ENCODE measurements at regions of chr19 and their contacts with region 1.

Region 1: DNA sequence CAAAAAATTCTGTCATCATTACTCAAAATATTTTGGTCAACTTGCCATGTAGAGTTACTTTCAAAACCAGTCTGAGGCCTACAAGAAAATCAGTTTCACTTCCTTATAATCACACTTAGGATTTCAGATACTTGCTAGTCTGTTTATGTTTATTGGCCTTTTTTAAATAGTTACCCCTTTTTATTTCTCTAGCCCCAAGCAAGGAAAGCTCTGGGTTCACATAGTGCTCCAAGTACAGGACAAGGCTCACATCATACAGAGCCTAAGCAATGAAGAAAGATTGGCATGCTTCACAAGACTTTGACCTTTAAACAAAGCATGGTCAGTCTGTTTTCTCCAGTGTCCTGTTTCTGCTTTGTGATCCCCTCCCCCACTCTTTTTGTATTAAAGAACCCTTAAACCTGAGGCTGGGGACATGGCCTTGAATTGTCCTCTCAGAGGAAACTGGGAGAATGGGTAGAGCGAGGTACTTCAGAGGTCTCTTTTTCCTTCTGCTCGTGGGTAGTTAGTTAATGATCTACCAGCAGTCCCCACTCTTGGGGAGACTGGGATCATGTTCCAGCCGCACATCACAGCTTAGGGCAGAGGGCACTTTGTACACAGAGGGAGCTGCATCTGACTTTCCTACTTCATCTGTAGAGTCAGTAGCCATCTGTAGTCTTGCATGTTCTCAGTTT is 30.7 kb downstream of the CEACAM1 start:
- DNase-seq: peak; percentile 98
- ATAC-seq: peak; percentile 99
- H3K4me3 ChIP-seq: peak overlapping the region in 2 of 3 experiments; percentile 36 to 44; a peak in 3 of 6 replicates
- H3K27ac ChIP-seq: peak overlapping the region; percentile 93
- H3K4me1 ChIP-seq: peaks cover 81% of the 10 kb centered on the region
- H3K27me3 ChIP-seq: no peaks in the 10 kb centered on the region
- CTCF ChIP-seq: peak; percentile 12; the same call in 1 of the 2 replicates
- EP300 ChIP-seq: peak; percentile 43 to 81; a peak in 2 of 4 replicates
- POLR2A ChIP-seq: peak; percentile 86 to 90
- RAD21 ChIP-seq: no peak

Region 2: DNA sequence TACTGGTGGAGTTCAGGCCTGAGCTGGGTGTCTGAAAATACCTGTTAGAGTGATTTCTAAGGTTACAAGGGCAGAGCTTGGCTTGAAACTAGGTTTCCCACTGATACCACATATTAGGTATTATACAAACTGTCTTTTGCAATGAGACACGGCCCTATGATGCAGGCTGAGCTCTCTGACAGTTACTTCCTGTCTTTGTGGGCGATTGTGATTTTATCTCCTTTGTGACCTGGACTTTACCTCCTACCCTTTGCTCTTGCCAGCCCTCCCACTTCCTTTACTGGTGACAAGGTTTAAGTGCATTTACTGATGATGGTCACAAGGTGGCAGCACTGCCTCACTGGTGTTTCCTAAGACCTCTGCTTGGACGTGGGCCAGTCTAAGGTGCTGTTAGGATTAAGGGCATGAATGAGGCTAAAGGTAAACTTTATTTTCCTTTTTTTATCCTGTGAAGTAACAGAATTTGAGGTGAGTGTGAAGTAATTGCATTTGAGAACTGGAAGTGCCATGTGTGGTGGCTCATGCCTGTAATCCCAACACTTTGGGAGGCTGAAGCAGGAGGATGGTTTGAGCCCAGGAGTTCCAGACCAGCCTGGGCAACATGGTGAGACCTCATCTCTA is 47.2 kb before region 1 on chr19:
- CTCF ChIA-PET with region 1: interaction called, 4 read pairs
- POLR2A ChIA-PET with region 1: interaction called, 17 read pairs
- in situ Hi-C with region 1: no loop called
- intact Hi-C with region 1: no loop called
- DNase-seq: peak; percentile 98
- ATAC-seq: peak; percentile 99
- H3K4me3 ChIP-seq: peak overlapping the region in 1 of 3 experiments; percentile 25; a peak in 1 of 6 replicates
- H3K27ac ChIP-seq: peak overlapping the region; percentile 71
- H3K4me1 ChIP-seq: peaks cover 79% of the 10 kb centered on the region
- H3K27me3 ChIP-seq: no peaks in the 10 kb centered on the region
- CTCF ChIP-seq: peak; percentile 98
- EP300 ChIP-seq: peak; percentile 62 to 92; a peak in 3 of 4 replicates
- POLR2A ChIP-seq: peak in 1 of 2 experiments; percentile 38; a peak in 1 of 4 replicates
- RAD21 ChIP-seq: peak; percentile 97

Region 3: DNA sequence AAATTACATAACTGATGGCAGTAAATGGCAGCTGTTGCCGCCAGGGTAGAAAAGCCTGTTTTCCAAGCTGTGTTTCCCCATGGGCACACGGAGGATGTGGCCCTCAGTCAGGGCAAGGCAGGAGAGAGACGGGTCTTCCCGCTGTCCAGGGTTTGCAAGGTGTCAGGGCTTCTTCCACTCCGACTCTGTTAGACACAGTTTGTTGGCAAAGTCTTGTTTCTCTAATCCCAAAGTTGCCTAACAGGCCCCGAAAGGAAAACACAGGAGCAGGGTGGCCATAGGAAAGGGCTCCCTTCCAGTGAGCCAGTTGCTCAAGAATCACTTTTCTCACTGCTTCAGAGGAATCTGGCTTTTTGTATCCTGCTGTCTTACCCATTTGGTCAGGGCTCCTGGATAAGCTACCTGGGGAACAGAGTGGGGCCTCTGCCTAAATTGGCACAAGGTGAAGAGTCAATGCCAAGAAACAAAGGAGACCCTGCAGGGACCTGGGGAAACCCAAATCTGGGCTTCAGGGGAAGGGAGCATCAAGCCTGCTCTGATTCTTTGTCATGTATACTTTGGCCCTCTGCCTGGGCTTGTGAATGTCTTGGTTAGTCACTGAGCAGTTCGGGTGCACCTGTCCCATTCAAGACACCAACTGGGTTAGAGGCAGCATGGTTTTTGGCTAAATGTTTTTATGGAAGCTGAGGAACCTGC is 25.9 kb before region 1 on chr19:
- CTCF ChIA-PET with region 1: no interaction called
- POLR2A ChIA-PET with region 1: interaction called, 25 read pairs
- in situ Hi-C with region 1: no loop called
- intact Hi-C with region 1: no loop called
- DNase-seq: no peak
- ATAC-seq: no peak
- H3K4me3 ChIP-seq: no peak overlapping the region
- H3K27ac ChIP-seq: no peak overlapping the region
- H3K4me1 ChIP-seq: peaks cover 59% of the 10 kb centered on the region
- H3K27me3 ChIP-seq: no peaks in the 10 kb centered on the region
- CTCF ChIP-seq: no peak
- EP300 ChIP-seq: no peak
- POLR2A ChIP-seq: no peak
- RAD21 ChIP-seq: no peak

Region 4: GRCh38 chr19:42487032-42487797 is 10.4 kb before region 1 on chr19:
- CTCF ChIA-PET with region 1: no interaction called
- POLR2A ChIA-PET with region 1: interaction called, 41 read pairs
- in situ Hi-C with region 1: no loop called
- intact Hi-C with region 1: loop called (anchors 1 kb)
- DNase-seq: no peak
- ATAC-seq: no peak
- H3K4me3 ChIP-seq: no peak overlapping the region
- H3K27ac ChIP-seq: peak overlapping the region; percentile 96
- H3K4me1 ChIP-seq: peaks cover 89% of the 10 kb centered on the region
- H3K27me3 ChIP-seq: no peaks in the 10 kb centered on the region
- CTCF ChIP-seq: no peak
- EP300 ChIP-seq: no peak
- POLR2A ChIP-seq: no peak
- RAD21 ChIP-seq: no peak

Region 5: DNA sequence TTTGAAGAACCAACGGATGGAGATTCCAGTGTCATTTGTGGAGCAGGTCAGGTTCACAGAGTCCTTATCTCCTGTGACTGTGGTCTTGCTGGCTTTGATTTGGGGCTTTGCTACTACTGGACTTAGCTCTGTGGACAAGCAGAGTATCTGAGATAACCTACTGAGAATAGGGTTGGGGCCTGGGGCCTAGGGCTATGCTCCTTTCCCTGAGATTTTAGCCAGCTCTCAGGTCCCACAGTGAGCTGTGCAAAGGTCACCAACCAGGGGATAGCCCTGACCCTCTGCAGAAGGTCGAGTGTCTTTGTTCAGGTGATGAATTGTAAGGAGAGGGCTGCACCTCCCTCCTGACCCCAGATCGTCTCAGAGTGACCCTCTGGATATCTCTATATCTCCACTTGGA is 21.5 kb after region 1 on chr19:
- CTCF ChIA-PET with region 1: no interaction called
- POLR2A ChIA-PET with region 1: interaction called, 15 read pairs
- in situ Hi-C with region 1: no loop called
- intact Hi-C with region 1: no loop called
- DNase-seq: no peak
- ATAC-seq: peak; percentile 44; the same call in 2 of the 3 replicates
- H3K4me3 ChIP-seq: no peak overlapping the region
- H3K27ac ChIP-seq: peak overlapping the region; percentile 43
- H3K4me1 ChIP-seq: peaks cover 69% of the 10 kb centered on the region
- H3K27me3 ChIP-seq: no peaks in the 10 kb centered on the region
- CTCF ChIP-seq: no peak
- EP300 ChIP-seq: no peak
- POLR2A ChIP-seq: 0 out of 4 replicates have a peak, but pooled peaks of 1 of the 2 experiments have one; percentile 15
- RAD21 ChIP-seq: no peak

Region 6: DNA sequence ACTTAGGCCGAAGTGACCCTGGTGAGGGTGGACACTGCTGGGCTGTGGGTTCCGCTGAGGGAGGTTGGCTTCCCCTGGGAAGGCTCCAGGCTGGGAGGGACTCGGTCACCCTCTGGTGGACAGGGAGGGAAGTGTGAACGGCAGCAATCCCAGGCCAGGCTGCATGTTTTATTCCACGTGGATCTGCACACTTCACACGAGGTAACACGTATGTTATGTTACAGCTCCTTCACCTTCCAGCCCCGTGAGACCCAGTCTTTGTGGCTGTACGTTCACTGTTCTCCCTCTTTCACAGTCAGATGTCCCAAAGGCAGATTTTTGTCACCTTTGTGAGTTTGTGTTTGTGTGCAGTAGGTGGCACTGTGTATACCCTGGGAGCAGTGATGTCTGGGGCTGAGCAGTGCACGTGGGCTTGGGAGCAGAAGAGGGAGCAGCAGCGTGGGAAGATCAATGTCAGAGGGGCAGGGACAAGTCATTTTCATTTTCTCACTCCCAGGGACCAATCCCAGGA is 421.9 kb after region 1 on chr19:
- CTCF ChIA-PET with region 1: no interaction called
- POLR2A ChIA-PET with region 1: no interaction called
- in situ Hi-C with region 1: no loop called
- intact Hi-C with region 1: no loop called
- DNase-seq: no peak
- ATAC-seq: no peak
- H3K4me3 ChIP-seq: no peak overlapping the region
- H3K27ac ChIP-seq: no peak overlapping the region
- H3K4me1 ChIP-seq: no peaks in the 10 kb centered on the region
- H3K27me3 ChIP-seq: no peaks in the 10 kb centered on the region; a peak in 1 of 5 replicates
- CTCF ChIP-seq: peak; percentile 31; the same call in 1 of the 2 replicates
- EP300 ChIP-seq: no peak
- POLR2A ChIP-seq: no peak
- RAD21 ChIP-seq: no peak